ENCODE measurements at regions of chr3 and their contacts with region 1.

Region 1: GRCh38 chr3:112498914-112499711 is at the start of gene BTLA:
- DNase-seq: peak; percentile 71
- H3K4me3 Mint-ChIP-seq: peak within 1 kb of the TSS; percentile 100
- H3K27ac Mint-ChIP-seq: peak within 1 kb of the TSS; percentile 100
- H3K4me1 Mint-ChIP-seq: peaks cover 51% of the 10 kb centered on the region
- H3K27me3 Mint-ChIP-seq: no peaks in the 10 kb centered on the region
- total RNA-seq, gene BTLA: 70.6 to 73.4 TPM

Region 2: DNA sequence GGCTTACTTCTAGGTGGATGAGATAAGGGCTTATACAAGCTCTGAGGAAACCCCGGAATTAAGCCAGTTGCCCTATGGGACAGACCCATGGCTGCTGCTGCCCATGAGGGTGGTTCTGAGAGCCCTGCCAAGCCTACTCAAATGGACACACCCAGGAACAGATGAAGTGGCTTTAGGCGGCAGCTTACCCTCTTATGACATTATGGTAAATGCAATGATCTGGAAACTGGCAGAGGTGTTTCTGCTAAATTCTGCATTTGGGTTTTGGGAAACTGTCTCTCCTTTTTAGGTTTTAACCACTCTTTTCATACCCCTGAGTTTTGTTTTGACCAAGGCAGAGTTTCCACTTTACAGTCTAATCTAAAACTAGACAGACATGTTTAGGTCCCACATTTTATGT is 895.0 kb before region 1 on chr3:
- CTCF ChIA-PET with region 1: no interaction called
- intact Hi-C with region 1: loop called (anchors 2 kb)
- DNase-seq: peak; percentile 70
- H3K4me3 Mint-ChIP-seq: peak overlapping the region; percentile 53
- H3K27ac Mint-ChIP-seq: peak overlapping the region; percentile 97
- H3K4me1 Mint-ChIP-seq: peaks cover 87% of the 10 kb centered on the region
- H3K27me3 Mint-ChIP-seq: no peaks in the 10 kb centered on the region

Region 3: DNA sequence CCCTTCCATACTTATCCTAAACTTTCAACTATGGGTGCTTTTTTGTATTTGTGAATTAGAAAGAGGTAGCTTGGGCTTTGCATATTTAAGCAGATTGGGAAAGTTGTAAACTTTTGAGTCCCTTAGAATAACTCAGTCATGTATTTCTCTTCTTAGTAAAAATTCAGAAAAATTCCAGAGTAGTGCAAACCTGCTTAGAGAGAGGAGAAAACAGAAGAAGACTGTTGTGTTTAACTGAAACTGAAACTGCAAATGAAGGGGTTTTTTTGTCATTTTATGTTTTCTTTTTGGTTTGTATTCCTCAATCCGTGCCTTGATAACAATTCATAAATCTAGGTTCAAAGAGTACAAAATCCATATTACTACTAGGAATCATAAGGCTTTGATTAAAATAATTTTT is 134.8 kb before region 1 on chr3:
- CTCF ChIA-PET with region 1: no interaction called
- intact Hi-C with region 1: no loop called
- DNase-seq: no peak
- H3K4me3 Mint-ChIP-seq: peak overlapping the region; percentile 17
- H3K27ac Mint-ChIP-seq: peak overlapping the region; percentile 82
- H3K4me1 Mint-ChIP-seq: peaks cover 42% of the 10 kb centered on the region
- H3K27me3 Mint-ChIP-seq: no peaks in the 10 kb centered on the region

Region 4: GRCh38 chr3:112642912-112643506 is 143.9 kb after region 1 on chr3:
- CTCF ChIA-PET with region 1: no interaction called
- intact Hi-C with region 1: no loop called
- DNase-seq: peak; percentile 92
- H3K4me3 Mint-ChIP-seq: peak overlapping the region; percentile 55
- H3K27ac Mint-ChIP-seq: no peak overlapping the region
- H3K4me1 Mint-ChIP-seq: peaks cover 14% of the 10 kb centered on the region
- H3K27me3 Mint-ChIP-seq: peaks cover 10% of the 10 kb centered on the region

Region 5: DNA sequence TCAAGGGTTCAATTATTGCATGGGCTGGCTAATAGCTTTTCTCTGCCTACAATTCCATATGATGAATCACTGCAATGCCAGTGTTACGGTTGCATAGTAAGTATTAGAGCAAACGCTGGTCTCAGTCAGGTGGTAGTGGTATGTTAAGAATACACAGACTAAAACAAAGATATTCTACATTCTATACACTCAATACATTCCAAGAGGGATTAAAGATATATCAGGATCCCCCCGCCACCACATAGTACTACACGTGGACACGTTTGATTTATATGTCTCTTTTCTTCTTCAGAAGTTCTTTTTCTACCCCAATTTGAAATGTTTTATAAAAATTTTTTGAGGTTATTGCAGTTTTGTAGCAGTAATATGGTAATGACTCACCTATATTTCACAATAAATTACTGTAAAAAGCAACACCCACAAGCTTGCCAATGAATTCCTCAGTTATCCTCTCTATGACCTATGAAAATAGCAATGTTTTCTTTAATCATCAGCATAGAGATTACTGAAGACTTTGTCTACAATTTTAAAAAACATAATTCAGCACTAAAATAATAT is 279.4 kb after region 1 on chr3:
- CTCF ChIA-PET with region 1: no interaction called
- intact Hi-C with region 1: no loop called
- DNase-seq: no peak
- H3K4me3 Mint-ChIP-seq: no peak overlapping the region
- H3K27ac Mint-ChIP-seq: no peak overlapping the region
- H3K4me1 Mint-ChIP-seq: peaks cover 15% of the 10 kb centered on the region
- H3K27me3 Mint-ChIP-seq: no peaks in the 10 kb centered on the region

Region 6: GRCh38 chr3:112793311-112794081 is 294.4 kb after region 1 on chr3:
- CTCF ChIA-PET with region 1: no interaction called
- intact Hi-C with region 1: no loop called
- DNase-seq: no peak
- H3K4me3 Mint-ChIP-seq: no peak overlapping the region
- H3K27ac Mint-ChIP-seq: no peak overlapping the region
- H3K4me1 Mint-ChIP-seq: peaks cover 26% of the 10 kb centered on the region
- H3K27me3 Mint-ChIP-seq: no peaks in the 10 kb centered on the region

Region 7: DNA sequence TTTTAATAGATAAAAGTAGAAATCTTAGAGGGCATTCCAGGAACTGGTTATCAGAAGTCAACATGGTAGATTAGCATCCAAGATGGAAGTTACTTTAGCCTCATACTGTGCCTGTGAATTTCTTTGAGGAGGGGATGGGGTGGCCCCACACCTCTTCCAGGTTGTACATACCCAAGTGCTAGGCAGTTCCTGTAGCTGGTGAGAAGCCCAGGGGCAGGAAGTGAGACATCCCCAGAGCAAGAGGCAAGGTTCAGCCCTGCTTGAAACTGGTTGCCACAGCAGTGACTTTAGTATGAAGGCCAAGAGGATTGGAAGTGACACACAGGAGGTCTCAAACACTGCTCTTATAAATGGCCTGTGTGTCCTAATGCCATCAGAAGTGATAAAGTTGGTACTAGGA is 503.6 kb after region 1 on chr3:
- CTCF ChIA-PET with region 1: no interaction called
- intact Hi-C with region 1: loop called (anchors 5 kb)
- DNase-seq: peak; percentile 90
- H3K4me3 Mint-ChIP-seq: peak overlapping the region; percentile 42
- H3K27ac Mint-ChIP-seq: peak overlapping the region; percentile 95
- H3K4me1 Mint-ChIP-seq: peaks cover 86% of the 10 kb centered on the region
- H3K27me3 Mint-ChIP-seq: no peaks in the 10 kb centered on the region

Measured in activated naive CD4-positive, alpha-beta T cell treated with anti-CD3 and anti-CD28 coated beads for 36 hours (primary cell).